ENCODE measurements at regions of chr20 and their contacts with region 1.

Region 1: DNA sequence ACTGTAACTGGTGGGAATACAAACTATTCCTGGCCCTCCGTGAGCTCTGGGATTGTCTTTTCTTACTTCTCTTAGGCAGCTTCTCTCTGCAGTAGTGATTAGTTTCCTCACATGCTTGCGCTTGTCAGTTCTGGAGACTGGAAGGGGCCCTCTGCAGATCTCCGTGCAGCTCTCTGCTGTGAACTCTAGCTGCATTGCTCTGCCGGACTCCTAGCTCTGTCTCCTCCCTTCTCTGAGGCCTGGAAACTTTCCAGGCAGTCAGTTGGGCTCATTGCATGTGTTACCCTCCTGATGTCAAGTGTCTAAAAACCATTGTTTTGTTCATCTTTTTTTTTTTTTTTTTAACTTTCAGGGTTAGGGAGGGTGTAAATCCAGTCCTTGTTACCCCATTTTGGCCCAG is 102.3 kb downstream of the CTNNBL1 start:
- DNase-seq: no peak
- H3K4me3 ChIP-seq: no peak overlapping the region
- H3K4me3 Mint-ChIP-seq: no peak overlapping the region
- H3K27ac Mint-ChIP-seq: no peak overlapping the region
- H3K4me1 ChIP-seq: no peaks in the 10 kb centered on the region
- H3K4me1 Mint-ChIP-seq: no peaks in the 10 kb centered on the region
- H3K27me3 ChIP-seq: no peaks in the 10 kb centered on the region
- H3K27me3 Mint-ChIP-seq: no peaks in the 10 kb centered on the region
- CTCF ChIP-seq: no peak

Region 2: DNA sequence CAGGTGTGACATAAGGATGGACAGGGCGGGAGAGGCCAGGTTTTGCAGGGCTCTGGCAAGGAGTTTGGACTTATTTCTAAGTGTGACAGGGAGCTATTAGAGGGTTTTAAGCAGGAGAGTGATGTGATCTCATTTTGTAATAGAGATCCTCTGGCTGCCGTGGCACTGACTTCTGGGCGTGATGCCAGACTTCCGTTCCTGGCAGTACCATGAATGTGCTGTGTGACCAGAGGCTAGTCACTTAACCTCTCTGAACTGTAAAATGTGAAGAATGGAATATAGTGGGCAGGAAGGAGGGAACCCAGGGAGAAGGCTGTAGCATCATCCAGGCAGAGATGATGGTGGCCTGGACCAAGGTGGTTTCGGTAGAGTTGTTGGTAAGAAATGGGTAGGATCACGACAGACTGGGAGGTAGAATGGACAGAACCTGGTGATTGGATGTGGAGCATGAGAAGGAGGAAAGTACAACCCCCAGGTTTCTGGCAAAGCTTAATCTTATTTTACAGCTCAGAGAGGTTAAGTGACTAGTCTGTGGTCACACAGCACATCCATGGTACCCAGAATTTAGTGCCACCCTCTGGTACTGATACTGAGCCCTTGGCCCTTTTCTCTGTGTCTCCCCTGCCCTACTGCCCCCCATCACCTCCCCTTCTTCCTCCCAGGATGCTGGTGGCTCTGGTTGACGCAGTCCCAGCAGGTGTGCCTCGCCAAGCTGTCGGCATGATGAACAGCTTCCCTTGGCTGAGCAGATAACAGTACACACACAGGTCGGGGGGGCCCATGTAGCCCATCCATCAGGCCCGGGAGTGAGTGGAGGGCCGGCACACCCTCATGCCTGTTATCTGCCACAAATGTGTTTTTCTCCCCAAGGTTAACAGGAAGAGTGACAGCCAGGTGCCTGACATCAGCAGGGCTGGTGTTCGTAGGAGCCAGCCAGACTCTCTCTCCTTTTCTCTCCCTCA is 155.2 kb before region 1 on chr20:
- CTCF ChIA-PET with region 1: no interaction called
- POLR2A ChIA-PET with region 1: interaction called, 12 read pairs
- intact Hi-C with region 1: no loop called
- DNase-seq: no peak
- H3K4me3 ChIP-seq: no peak overlapping the region
- H3K4me3 Mint-ChIP-seq: no peak overlapping the region
- H3K27ac Mint-ChIP-seq: no peak overlapping the region
- H3K4me1 ChIP-seq: no peaks in the 10 kb centered on the region; the same call in 1 of the 2 replicates
- H3K4me1 Mint-ChIP-seq: no peaks in the 10 kb centered on the region
- H3K27me3 ChIP-seq: no peaks in the 10 kb centered on the region; the same call in none of the 2 replicates
- H3K27me3 Mint-ChIP-seq: peaks cover 25% of the 10 kb centered on the region
- CTCF ChIP-seq: no peak

Region 3: GRCh38 chr20:37734228-37734985 is 61.7 kb before region 1 on chr20:
- CTCF ChIA-PET with region 1: no interaction called
- POLR2A ChIA-PET with region 1: no interaction called
- intact Hi-C with region 1: no loop called
- DNase-seq: no peak
- H3K4me3 ChIP-seq: no peak overlapping the region
- H3K4me3 Mint-ChIP-seq: no peak overlapping the region
- H3K27ac Mint-ChIP-seq: peak overlapping the region; percentile 20
- H3K4me1 ChIP-seq: peaks cover 52% of the 10 kb centered on the region
- H3K4me1 Mint-ChIP-seq: peaks cover 25% of the 10 kb centered on the region
- H3K27me3 ChIP-seq: no peaks in the 10 kb centered on the region
- H3K27me3 Mint-ChIP-seq: no peaks in the 10 kb centered on the region
- CTCF ChIP-seq: no peak

Region 4: GRCh38 chr20:38001979-38002378 is 205.9 kb after region 1 on chr20:
- CTCF ChIA-PET with region 1: no interaction called
- POLR2A ChIA-PET with region 1: no interaction called
- intact Hi-C with region 1: no loop called
- DNase-seq: peak in 1 of 2 experiments; percentile 30
- H3K4me3 ChIP-seq: no peak overlapping the region
- H3K4me3 Mint-ChIP-seq: no peak overlapping the region
- H3K27ac Mint-ChIP-seq: no peak overlapping the region
- H3K4me1 ChIP-seq: no peaks in the 10 kb centered on the region
- H3K4me1 Mint-ChIP-seq: no peaks in the 10 kb centered on the region
- H3K27me3 ChIP-seq: no peaks in the 10 kb centered on the region
- H3K27me3 Mint-ChIP-seq: no peaks in the 10 kb centered on the region
- CTCF ChIP-seq: no peak